ENCODE measurements at regions of chr12 and their contacts with region 1.

Region 1: DNA sequence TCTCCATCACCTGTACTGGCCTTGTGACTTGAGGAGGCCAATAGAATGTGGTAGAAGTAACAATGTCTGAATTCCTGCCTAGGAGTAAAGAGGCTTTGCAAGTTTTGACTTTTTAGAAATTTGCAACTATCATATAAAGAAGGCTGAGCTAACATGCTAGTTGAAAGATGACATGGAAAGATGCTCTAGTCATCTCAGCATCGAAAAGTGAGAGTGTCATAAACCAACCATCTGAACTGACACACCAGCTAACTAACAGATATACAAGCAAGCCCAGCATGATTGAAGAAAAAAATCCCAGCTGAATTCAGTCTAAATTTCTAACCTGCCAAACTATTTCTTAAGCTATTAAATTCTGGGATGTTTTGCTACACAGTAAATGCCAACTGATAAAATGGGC is 116.8 kb downstream of the NELL2 start:
- DNase-seq: no peak
- ATAC-seq: no peak
- H3K4me3 ChIP-seq: no peak overlapping the region
- H3K4me3 Mint-ChIP-seq: no peak overlapping the region
- H3K27ac ChIP-seq: no peak overlapping the region
- H3K27ac Mint-ChIP-seq: no peak overlapping the region
- H3K4me1 ChIP-seq: no peaks in the 10 kb centered on the region
- H3K4me1 Mint-ChIP-seq: peaks cover 0 to 17% (median 14%) of the 10 kb centered on the region in 7 donors
- H3K27me3 ChIP-seq: no peaks in the 10 kb centered on the region
- H3K27me3 Mint-ChIP-seq: no peaks in the 10 kb centered on the region

Region 2: GRCh38 chr12:44720265-44720664 is 39.0 kb before region 1 on chr12:
- CTCF ChIA-PET with region 1: no interaction called
- POLR2A ChIA-PET with region 1: no interaction called
- intact Hi-C with region 1: loop called in 1 of 2 experiments (anchors 5 kb)
- DNase-seq: no peak
- ATAC-seq: no peak
- H3K4me3 ChIP-seq: no peak overlapping the region
- H3K4me3 Mint-ChIP-seq: no peak overlapping the region
- H3K27ac ChIP-seq: no peak overlapping the region
- H3K27ac Mint-ChIP-seq: peak overlapping the region in 2 of 9 donors; percentile 12 to 33
- H3K4me1 ChIP-seq: no peaks in the 10 kb centered on the region
- H3K4me1 Mint-ChIP-seq: peaks cover 0 to 76% (median 29%) of the 10 kb centered on the region in 7 donors
- H3K27me3 ChIP-seq: no peaks in the 10 kb centered on the region
- H3K27me3 Mint-ChIP-seq: no peaks in the 10 kb centered on the region

Measured in naive thymus-derived CD4-positive, alpha-beta T cell (primary cell).